Common myeloid progenitor, CD34-positive (primary cell): ENCODE measurements at regions of chr1 and their contacts with region 1.

Region 1: GRCh38 chr1:15847100-15847892 is at the start of gene SPEN:
- DNase-seq: peak; percentile 98 to 99 (median 99)
- H3K4me3 ChIP-seq: peak within 1 kb of the TSS; percentile 85 to 100 (median 91)
- H3K27ac ChIP-seq: peak within 1 kb of the TSS; percentile 89 to 97
- H3K4me1 ChIP-seq: peaks cover 23 to 52% (median 40%) of the 10 kb centered on the region in 4 experiments
- H3K27me3 ChIP-seq: no peaks in the 10 kb centered on the region

Region 2: GRCh38 chr1:15835741-15836510 is 11.4 kb before region 1 on chr1:
- CTCF ChIA-PET with region 1: interaction called, 15 read pairs
- POLR2A ChIA-PET with region 1: interaction called, 20 read pairs
- DNase-seq: peak; percentile 99 to 100 (median 99)
- H3K4me3 ChIP-seq: peak overlapping the region; percentile 74 to 96 (median 92)
- H3K27ac ChIP-seq: peak overlapping the region; percentile 96 to 99
- H3K4me1 ChIP-seq: peaks cover 9 to 51% (median 42%) of the 10 kb centered on the region in 4 experiments
- H3K27me3 ChIP-seq: no peaks in the 10 kb centered on the region

Region 3: DNA sequence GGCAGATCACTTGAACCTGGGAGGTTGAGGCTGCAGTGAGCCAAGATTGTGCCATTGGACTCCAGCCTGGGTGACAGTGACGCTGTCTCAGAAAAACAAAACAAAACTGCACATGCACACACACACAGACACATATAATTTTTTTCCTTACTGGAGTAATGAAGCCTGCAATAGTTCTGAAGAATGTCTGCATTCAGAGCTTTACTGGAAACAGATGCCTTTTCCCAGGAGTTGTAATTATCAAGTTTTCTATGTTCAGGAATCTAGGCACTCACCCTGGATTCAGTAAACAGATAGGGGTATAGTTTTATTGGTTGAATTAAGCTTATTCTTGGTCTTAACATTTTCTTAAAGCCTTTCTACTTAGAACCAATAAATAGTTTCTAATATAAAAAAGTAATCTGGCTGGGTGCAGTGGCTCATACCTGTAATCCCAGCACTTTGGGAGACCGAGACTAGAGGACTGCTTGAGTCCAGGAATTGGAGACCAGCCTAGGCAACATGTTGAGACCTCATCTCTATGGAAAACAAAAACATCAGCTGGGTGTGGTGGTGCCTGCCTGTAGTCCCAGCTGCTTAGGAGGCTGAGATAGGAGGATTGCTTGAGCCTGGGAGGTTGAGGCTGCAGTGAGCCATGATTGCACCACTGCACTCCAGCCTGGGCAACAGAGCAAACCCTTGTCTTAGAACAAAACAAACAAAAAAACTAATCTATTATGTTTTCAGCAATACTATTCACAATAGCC is 16.0 kb after region 1 on chr1:
- CTCF ChIA-PET with region 1: interaction called, 10 read pairs
- POLR2A ChIA-PET with region 1: interaction called, 4 read pairs
- DNase-seq: no peak
- H3K4me3 ChIP-seq: no peak overlapping the region
- H3K27ac ChIP-seq: no peak overlapping the region
- H3K4me1 ChIP-seq: peaks cover 0 to 7% (median 0%) of the 10 kb centered on the region in 4 experiments
- H3K27me3 ChIP-seq: no peaks in the 10 kb centered on the region

Region 4: GRCh38 chr1:15885701-15886610 is 38.7 kb after region 1 on chr1:
- CTCF ChIA-PET with region 1: interaction called, 4 read pairs
- POLR2A ChIA-PET with region 1: interaction called, 12 read pairs
- DNase-seq: peak; percentile 89 to 95 (median 94)
- H3K4me3 ChIP-seq: peak overlapping the region; percentile 33 to 79 (median 63)
- H3K27ac ChIP-seq: peak overlapping the region; percentile 75 to 91
- H3K4me1 ChIP-seq: peaks cover 14 to 45% (median 34%) of the 10 kb centered on the region in 4 experiments
- H3K27me3 ChIP-seq: no peaks in the 10 kb centered on the region